ENCODE measurements at regions of chr17 and their contacts with region 1.

Region 1: DNA sequence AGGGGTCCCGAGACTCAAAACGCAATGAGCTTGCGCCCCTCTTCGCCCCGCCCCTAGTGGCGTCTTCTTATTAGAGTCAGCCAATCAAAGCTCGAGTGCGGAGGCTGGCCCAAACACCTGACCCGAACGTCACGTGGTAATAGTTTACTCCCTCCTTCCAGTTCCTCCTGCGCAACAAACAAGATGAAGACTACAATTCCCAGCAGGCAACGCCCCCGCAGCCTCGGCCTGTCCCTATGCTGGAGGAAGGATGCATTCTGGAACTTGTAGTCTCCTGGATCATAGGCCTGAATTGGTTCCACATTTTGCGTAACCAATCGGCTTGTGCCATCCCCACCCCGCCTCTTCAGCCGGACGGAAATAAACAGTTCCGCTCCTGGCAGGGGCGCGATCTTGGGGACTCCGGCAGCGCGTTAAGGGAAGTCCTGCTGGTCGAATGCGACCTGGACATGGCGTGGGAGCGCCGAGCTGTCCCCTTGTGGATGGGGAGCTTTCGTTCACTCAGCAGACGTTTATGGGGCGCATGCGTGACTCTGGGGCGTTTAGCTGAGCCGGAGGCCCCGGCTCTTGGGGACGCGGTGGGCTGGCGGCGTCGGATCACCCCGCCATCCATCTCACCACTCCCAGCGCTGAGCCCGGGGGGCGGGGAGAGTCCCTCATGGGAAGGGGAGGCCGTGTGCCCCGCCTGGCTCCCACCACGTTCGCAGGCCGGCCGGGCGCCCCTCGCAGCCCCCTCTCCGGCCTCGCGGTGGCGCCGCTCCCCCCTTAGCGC is at the start of gene WBP2:
- DNase-seq: peak; percentile 100
- H3K4me3 ChIP-seq: peak within 1 kb of the TSS; percentile 79
- H3K27me3 ChIP-seq: no peaks in the 10 kb centered on the region
- CTCF ChIP-seq: peak; percentile 17; the same call in 1 of the 2 replicates
- polyA plus RNA-seq, gene WBP2: 28.5 and 37.0 TPM in 2 replicates

Region 2: DNA sequence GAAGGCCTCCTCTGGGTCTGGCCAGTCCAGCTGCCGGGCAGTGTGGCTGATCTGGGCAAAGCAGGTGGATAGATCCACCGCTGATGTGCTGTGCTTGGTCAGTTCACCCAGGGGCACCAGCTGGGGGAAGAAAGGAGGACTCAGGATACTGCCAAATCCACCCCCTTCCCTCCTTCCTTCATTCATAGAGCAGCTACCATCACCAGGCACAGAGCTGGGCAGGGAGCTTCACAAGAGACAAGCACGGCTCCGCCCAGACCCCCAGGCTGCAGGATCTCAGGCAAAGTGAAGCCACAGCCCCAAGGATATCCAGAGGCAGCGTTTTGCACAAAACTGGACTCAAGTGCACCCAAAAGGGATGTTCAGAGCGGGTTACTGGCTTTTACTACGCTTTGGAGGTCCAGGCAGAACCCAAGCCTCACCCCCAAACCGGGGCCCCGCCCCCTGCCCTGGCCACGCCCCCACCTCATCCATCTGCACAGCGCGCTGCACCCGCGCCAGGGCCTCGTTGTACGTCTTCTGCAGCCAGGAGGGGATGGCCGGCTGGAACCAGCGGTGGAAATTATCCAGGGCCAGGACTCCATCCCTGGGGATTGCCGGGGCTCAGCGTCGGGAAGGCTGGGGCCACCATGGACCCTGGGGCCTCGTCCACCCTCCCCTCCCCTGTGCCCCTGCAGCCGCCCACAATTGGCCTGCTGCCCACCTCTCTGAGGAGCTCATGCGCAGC is 20.4 kb before region 1 on chr17:
- CTCF ChIA-PET with region 1: interaction called, 5 read pairs
- POLR2A ChIA-PET with region 1: interaction called, 13 read pairs
- DNase-seq: no peak
- H3K4me3 ChIP-seq: no peak overlapping the region
- H3K27me3 ChIP-seq: no peaks in the 10 kb centered on the region
- CTCF ChIP-seq: no peak

Region 3: DNA sequence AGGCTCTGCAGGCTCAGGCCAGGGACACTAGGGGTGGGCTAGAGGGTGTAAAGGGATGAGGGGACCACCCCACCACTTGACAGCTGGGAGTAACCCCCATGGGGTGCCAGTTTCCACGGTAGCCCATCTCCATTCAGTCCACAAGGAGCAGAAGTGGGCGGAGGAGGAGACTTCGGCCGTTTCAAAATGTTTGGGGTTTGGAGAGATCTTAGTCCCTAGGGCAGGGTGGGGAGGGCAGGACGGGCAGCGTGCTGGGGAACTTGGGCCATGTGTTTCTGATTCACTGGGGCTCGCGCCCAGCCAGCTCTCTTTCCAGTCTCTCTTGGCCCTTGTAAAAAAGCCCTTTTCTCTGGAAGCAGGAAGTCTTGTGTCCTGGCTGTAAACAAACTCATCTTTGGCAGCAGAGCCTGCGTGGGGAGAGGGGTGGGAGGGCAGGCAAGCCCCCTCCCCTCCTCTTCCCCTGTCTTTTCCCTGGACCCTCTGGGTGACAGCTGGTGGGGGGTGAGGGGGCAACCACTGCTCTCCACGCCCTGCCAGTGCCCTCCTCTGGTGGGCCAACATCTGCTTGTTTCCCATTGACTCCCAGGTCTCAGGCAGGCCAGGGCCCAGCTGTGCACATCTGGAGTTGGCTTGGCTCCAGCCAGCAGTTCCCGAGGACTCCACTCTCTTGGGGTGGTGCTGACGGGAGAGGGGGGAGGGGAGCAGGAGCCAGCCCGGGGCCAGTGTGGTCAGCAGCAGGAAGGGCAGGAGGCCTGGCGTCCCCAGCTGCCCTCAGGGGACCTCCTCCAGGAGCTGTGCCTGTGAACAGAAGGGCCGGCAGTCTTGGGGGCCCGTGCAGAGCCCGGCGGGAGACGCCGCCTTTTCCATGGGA is 674.0 kb after region 1 on chr17:
- CTCF ChIA-PET with region 1: no interaction called
- POLR2A ChIA-PET with region 1: interaction called, 13 read pairs
- DNase-seq: peak; percentile 86
- H3K4me3 ChIP-seq: no peak overlapping the region
- H3K27me3 ChIP-seq: no peaks in the 10 kb centered on the region
- CTCF ChIP-seq: no peak

Measured in BJ (cell line).